ENCODE measurements at regions of chr22 and their contacts with region 1.

Region 1: GRCh38 chr22:21952586-21953571 is at the start of gene PPM1F:
- DNase-seq: peak in 1 of 2 experiments; percentile 83
- H3K4me3 ChIP-seq: peak within 1 kb of the TSS; percentile 60
- H3K27ac ChIP-seq: no peak within 1 kb of the TSS
- H3K4me1 ChIP-seq: peaks cover 5% of the 10 kb centered on the region
- H3K27me3 ChIP-seq: no peaks in the 10 kb centered on the region
- CTCF ChIP-seq: peak; percentile 64
- total RNA-seq, gene PPM1F: 20.6 and 22.1 TPM in 2 replicates

Region 2: GRCh38 chr22:21712894-21713712 is 239.8 kb before region 1 on chr22:
- CTCF ChIA-PET with region 1: no interaction called
- POLR2A ChIA-PET with region 1: interaction called, 3 read pairs
- intact Hi-C with region 1: loop called (anchors 2 kb)
- DNase-seq: peak in 1 of 2 experiments; percentile 37
- H3K4me3 ChIP-seq: no peak overlapping the region
- H3K27ac ChIP-seq: no peak overlapping the region
- H3K4me1 ChIP-seq: no peaks in the 10 kb centered on the region
- H3K27me3 ChIP-seq: no peaks in the 10 kb centered on the region
- CTCF ChIP-seq: peak; percentile 67

Region 3: DNA sequence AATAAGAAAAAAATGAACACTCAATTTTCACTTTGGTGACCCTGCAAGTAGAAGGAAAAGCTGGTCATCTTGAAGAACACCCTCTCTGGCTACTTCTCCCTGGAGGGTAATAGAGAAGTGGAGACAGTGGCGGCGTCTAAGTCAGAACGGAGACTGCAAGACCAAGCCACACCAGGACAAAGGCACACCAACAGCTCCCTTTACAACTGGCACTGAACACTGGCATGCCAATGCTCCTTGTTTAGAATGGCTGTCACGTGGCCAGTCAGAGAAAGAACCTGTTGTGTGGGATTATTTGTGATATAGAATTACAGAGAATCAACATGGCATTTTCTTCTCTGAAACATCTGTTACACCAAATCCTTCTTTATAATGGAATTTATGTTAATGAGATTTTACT is 156.0 kb before region 1 on chr22:
- CTCF ChIA-PET with region 1: no interaction called
- POLR2A ChIA-PET with region 1: no interaction called
- intact Hi-C with region 1: no loop called
- DNase-seq: no peak
- H3K4me3 ChIP-seq: no peak overlapping the region
- H3K27ac ChIP-seq: no peak overlapping the region
- H3K4me1 ChIP-seq: no peaks in the 10 kb centered on the region
- H3K27me3 ChIP-seq: no peaks in the 10 kb centered on the region
- CTCF ChIP-seq: no peak